A549 (cell line): ENCODE measurements at regions of chr1 and their contacts with region 1.

Region 1: GRCh38 chr1:76154206-76154956 is 79.8 kb downstream of the ST6GALNAC3 start:
- DNase-seq: peak; percentile 28 to 62
- ATAC-seq: peak; percentile 94 to 99
- H3K4me3 ChIP-seq: peak overlapping the region; percentile 43
- H3K27ac ChIP-seq: peak overlapping the region; percentile 5 to 58; a peak in 2 of 6 replicates
- H3K4me1 ChIP-seq: no peaks in the 10 kb centered on the region
- CTCF ChIP-seq: peak; percentile 78
- EP300 ChIP-seq: no peak
- POLR2A ChIP-seq: no peak
- RAD21 ChIP-seq: peak; percentile 72 to 76

Region 2: DNA sequence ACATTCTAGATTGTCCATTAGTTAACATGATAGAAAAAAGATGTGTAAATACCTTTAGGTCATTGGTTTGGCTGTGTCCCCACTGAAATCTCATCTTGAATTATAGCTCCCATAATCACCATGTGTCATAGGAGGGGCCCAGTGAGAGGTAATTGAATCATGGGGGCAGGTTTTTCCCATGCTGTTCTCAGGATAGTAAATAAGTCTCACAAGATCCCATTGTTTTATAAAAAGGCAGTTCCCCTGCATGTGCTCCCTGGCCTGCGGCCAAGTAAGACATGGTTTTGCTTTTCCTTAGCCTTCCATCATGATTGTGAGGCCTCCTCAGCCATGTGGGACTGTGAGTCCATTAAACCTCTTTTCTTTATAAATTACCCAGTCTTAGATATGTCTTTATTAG is 510.9 kb before region 1 on chr1:
- CTCF ChIA-PET with region 1: no interaction called
- POLR2A ChIA-PET with region 1: no interaction called
- DNase-seq: no peak
- ATAC-seq: no peak
- H3K4me3 ChIP-seq: no peak overlapping the region
- H3K27ac ChIP-seq: no peak overlapping the region
- H3K4me1 ChIP-seq: no peaks in the 10 kb centered on the region
- CTCF ChIP-seq: no peak
- EP300 ChIP-seq: no peak
- POLR2A ChIP-seq: no peak
- RAD21 ChIP-seq: no peak

Region 3: GRCh38 chr1:75908717-75909152 is 245.6 kb before region 1 on chr1:
- CTCF ChIA-PET with region 1: interaction called, 10 read pairs
- POLR2A ChIA-PET with region 1: no interaction called
- DNase-seq: peak; percentile 4 to 53
- ATAC-seq: peak; percentile 92 to 96
- H3K4me3 ChIP-seq: no peak overlapping the region
- H3K27ac ChIP-seq: peak overlapping the region in 1 of 2 experiments; percentile 42; a peak in 1 of 6 replicates
- H3K4me1 ChIP-seq: no peaks in the 10 kb centered on the region
- CTCF ChIP-seq: peak; percentile 66
- EP300 ChIP-seq: no peak
- POLR2A ChIP-seq: no peak
- RAD21 ChIP-seq: peak; percentile 77 to 82

Region 4: DNA sequence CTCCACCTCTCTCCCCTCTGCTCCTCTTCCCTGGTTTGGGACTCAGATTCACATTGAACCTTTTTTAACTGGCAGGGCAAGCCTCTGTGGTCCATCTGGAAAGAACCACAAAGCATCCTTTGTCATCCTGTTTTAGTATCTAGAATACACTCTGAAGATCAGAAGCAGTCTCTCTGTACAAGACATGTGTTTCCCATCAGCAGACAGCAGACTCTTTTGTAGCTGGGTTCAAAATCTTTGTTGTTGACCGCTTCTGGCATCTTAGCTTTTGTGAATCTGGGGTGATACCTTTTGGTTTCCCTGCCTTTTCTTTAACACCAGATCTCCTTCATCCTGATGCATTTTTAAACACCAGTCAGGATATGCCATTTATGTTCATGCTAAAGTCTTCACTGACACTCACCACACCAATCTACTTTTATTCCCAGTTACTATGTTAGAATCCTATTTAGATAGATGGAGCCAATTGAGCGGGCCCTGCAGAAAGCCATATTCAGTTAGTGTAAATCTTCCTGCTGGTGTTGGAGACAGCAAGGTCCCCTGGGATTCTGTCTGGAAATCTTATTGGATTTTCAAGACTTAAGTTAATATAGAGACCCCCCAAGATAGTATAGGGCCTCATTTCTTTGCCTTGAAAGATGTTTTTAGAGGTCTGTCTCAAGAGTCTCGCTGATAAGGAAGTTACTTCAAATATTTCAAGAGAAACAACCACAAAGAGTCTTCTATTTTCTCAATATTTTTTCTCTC is 28.7 kb before region 1 on chr1:
- CTCF ChIA-PET with region 1: no interaction called
- POLR2A ChIA-PET with region 1: no interaction called
- DNase-seq: no peak
- ATAC-seq: no peak
- H3K4me3 ChIP-seq: no peak overlapping the region
- H3K27ac ChIP-seq: no peak overlapping the region
- H3K4me1 ChIP-seq: no peaks in the 10 kb centered on the region
- CTCF ChIP-seq: no peak
- EP300 ChIP-seq: no peak
- POLR2A ChIP-seq: no peak
- RAD21 ChIP-seq: no peak

Region 5: GRCh38 chr1:77126307-77126706 is 971.9 kb after region 1 on chr1:
- CTCF ChIA-PET with region 1: interaction called, 20 read pairs
- POLR2A ChIA-PET with region 1: no interaction called
- DNase-seq: peak in 1 of 2 experiments; percentile 70
- ATAC-seq: peak; percentile 70 to 71; a peak in 4 of 6 replicates
- H3K4me3 ChIP-seq: no peak overlapping the region
- H3K27ac ChIP-seq: no peak overlapping the region
- H3K4me1 ChIP-seq: no peaks in the 10 kb centered on the region
- CTCF ChIP-seq: peak; percentile 66
- EP300 ChIP-seq: no peak
- POLR2A ChIP-seq: no peak
- RAD21 ChIP-seq: peak; percentile 82 to 86